ENCODE measurements at regions of chr22 and their contacts with region 1.

Region 1: DNA sequence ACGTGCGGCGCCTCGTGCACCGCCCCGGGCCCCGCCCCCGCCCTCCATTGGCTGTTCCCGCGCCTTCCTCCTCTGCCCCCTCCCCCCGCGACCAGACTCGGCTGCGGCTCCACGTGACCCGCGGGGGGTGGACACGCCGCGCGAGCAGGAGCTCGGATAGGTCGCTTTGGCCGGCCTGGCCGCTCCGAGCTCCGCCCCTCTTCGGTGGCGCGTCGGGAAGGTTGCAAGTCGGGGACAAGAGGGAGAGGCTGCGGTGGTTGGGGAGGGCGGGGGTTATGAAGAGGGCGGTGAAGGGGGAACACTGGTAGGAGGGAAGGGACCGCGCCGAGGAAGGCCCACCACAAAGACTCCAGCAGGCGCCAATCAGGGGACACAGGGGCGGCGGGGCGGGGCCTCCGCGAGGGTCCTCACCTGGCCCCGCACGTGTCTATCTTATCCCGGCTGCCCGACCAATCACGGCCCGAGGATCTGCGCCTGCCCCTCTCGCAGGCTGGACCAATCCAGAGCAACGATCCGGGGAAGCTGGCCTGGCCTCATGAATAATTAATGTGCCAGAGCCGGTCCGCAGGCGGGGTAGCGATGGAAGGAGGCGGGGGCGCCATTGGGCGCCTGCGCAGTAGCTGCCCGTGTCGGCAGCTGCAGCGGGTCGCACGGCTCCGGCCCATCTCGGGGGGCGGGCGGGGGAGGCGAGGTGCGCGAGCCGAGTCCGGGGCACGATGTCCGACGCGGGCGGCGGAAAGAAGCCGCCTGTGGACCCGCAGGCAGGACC is at the start of gene TEF:
- DNase-seq: peak; percentile 98
- ATAC-seq: peak; percentile 93
- H3K4me3 Mint-ChIP-seq: peak within 1 kb of the TSS; percentile 87
- H3K27ac Mint-ChIP-seq: peak within 1 kb of the TSS; percentile 96
- H3K4me1 Mint-ChIP-seq: peaks cover 17% of the 10 kb centered on the region
- H3K27me3 Mint-ChIP-seq: peaks cover 6% of the 10 kb centered on the region
- total RNA-seq, gene TEF: 2.9 to 3.0 TPM

Region 2: GRCh38 chr22:40939202-40939601 is 442.3 kb before region 1 on chr22:
- CTCF ChIA-PET with region 1: no interaction called
- POLR2A ChIA-PET with region 1: no interaction called
- DNase-seq: no peak
- ATAC-seq: no peak
- H3K4me3 Mint-ChIP-seq: no peak overlapping the region
- H3K27ac Mint-ChIP-seq: no peak overlapping the region
- H3K4me1 Mint-ChIP-seq: peaks cover 2% of the 10 kb centered on the region
- H3K27me3 Mint-ChIP-seq: no peaks in the 10 kb centered on the region

Region 3: GRCh38 chr22:41448189-41448808 is 66.8 kb after region 1 on chr22:
- CTCF ChIA-PET with region 1: no interaction called
- POLR2A ChIA-PET with region 1: interaction called, 12 read pairs
- DNase-seq: peak; percentile 96
- ATAC-seq: peak; percentile 71
- H3K4me3 Mint-ChIP-seq: peak overlapping the region; percentile 90
- H3K27ac Mint-ChIP-seq: peak overlapping the region; percentile 100
- H3K4me1 Mint-ChIP-seq: peaks cover 12% of the 10 kb centered on the region
- H3K27me3 Mint-ChIP-seq: no peaks in the 10 kb centered on the region

Measured in activated CD8-positive, alpha-beta T cell treated with anti-CD3 and anti-CD28 coated beads, Interleukin-2, amount 10 ng/mL, durations not matched to agents 7 days and 5 days (primary cell).